ENCODE measurements at regions of chr5 and their contacts with region 1.

Region 1: GRCh38 chr5:22242537-22242936 is 610.6 kb downstream of the CDH12 start:
- DNase-seq: peak; percentile 35
- ATAC-seq: peak; percentile 80
- H3K4me3 ChIP-seq: no peak overlapping the region
- H3K27ac ChIP-seq: no peak overlapping the region
- H3K4me1 ChIP-seq: no peaks in the 10 kb centered on the region
- H3K27me3 ChIP-seq: peaks cover 20% of the 10 kb centered on the region
- CTCF ChIP-seq: peak; percentile 56

Region 2: GRCh38 chr5:22852807-22853660 is 610.5 kb after region 1 on chr5 and contains the start of gene CDH12:
- CTCF ChIA-PET with region 1: no interaction called
- POLR2A ChIA-PET with region 1: no interaction called
- intact Hi-C with region 1: loop called (anchors 10 kb)
- DNase-seq: peak; percentile 25
- ATAC-seq: peak; percentile 84
- H3K4me3 ChIP-seq: peak within 1 kb of the TSS; percentile 67
- H3K27ac ChIP-seq: no peak within 1 kb of the TSS
- H3K4me1 ChIP-seq: peaks cover 12% of the 10 kb centered on the region; the same call in 1 of the 2 replicates
- H3K27me3 ChIP-seq: peaks cover 17% of the 10 kb centered on the region; the same call in 1 of the 2 replicates
- CTCF ChIP-seq: no peak
- total RNA-seq, gene CDH12: 0.44 TPM in 1 of 2 replicates, not detected in the other

Region 3: DNA sequence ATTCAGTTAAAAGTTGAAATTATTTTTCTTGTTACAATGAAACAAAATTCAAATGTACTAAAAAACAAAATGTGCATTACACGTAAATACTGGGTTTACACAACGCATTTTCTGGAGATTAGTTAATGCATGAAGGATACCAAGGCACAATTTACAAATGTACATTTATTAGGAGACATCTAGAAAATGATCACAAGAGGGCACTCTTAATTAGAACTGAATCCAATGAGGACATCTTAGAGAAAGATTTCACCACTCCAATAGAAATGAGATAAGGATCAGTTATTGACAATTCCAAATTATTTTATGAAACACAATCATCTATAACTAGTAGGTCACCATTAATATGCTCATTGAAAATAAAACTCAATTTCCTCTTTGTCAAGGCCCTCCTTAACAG is 647.2 kb after region 1 on chr5:
- CTCF ChIA-PET with region 1: no interaction called
- POLR2A ChIA-PET with region 1: no interaction called
- intact Hi-C with region 1: loop called (anchors 10 kb)
- DNase-seq: peak; percentile 36
- ATAC-seq: no peak
- H3K4me3 ChIP-seq: no peak overlapping the region
- H3K27ac ChIP-seq: no peak overlapping the region
- H3K4me1 ChIP-seq: no peaks in the 10 kb centered on the region
- H3K27me3 ChIP-seq: no peaks in the 10 kb centered on the region
- CTCF ChIP-seq: peak; percentile 61